Adrenal gland (tissue), 19 donors: ENCODE measurements at regions of chr5 and their contacts with region 1.

Region 1: GRCh38 chr5:73540192-73540591 is 25.2 kb downstream of the ANKRA2 start:
- DNase-seq: peak in 2 of 7 donors; percentile 38 to 43
- H3K4me3 ChIP-seq: no peak overlapping the region
- H3K27ac ChIP-seq: no peak overlapping the region
- H3K4me1 ChIP-seq: peaks cover 0 to 8% of the 10 kb centered on the region in 2 donors
- H3K27me3 ChIP-seq: no peaks in the 10 kb centered on the region
- CTCF ChIP-seq: no peak
- POLR2A ChIP-seq: no peak

Region 2: DNA sequence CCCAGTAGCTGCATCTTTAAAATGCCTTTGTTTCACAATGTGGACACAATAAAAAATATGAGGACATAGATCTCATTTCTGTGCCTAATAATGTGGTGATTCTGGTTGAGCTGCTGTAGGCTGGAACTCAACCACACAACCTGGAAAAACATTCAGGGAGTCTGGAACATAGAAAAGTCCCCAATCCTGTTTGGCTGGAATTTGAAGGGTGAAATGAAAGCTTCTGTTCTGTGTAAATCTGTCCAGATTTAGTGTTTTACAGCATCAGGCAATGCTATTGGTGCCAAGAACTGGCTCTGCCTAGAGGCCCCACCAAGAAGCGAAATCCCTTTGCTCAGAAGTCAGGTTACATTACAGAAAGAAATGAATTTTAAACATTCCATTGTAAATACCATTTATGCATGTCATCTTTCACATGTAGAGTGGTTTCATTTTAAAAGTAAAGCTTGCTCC is 311.0 kb before region 1 on chr5:
- intact Hi-C with region 1: loop called in 1 of 2 experiments (anchors 10 kb)
- DNase-seq: no peak
- H3K4me3 ChIP-seq: no peak overlapping the region
- H3K27ac ChIP-seq: no peak overlapping the region
- H3K4me1 ChIP-seq: peaks cover 10 to 11% of the 10 kb centered on the region in 2 donors
- H3K27me3 ChIP-seq: peaks cover 46% of the 10 kb centered on the region
- CTCF ChIP-seq: no peak
- POLR2A ChIP-seq: no peak

Region 3: DNA sequence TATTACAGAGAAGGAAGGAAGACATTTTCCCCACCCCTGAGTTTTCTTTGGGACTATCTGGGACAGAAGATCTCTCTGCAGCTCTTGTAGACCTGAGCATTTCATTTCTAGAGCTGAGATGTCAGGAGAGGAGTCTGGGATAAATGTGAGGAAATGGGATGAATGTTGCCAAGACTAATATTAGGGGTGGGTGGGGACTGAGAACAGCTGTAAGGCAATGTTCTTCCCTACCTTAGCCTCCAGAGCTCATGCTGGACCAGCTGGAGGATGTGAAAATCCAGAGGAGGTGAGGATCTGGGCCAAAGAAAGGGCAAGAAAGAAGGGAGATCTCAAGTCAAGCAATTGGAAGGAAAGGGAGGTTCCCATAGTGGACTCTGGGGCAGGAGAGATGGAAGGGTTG is 68.5 kb before region 1 on chr5:
- intact Hi-C with region 1: no loop called
- DNase-seq: no peak
- H3K4me3 ChIP-seq: no peak overlapping the region
- H3K27ac ChIP-seq: no peak overlapping the region
- H3K4me1 ChIP-seq: no peaks in the 10 kb centered on the region
- H3K27me3 ChIP-seq: no peaks in the 10 kb centered on the region
- CTCF ChIP-seq: no peak
- POLR2A ChIP-seq: no peak

Region 4: GRCh38 chr5:73519531-73520283 is 20.5 kb before region 1 on chr5:
- intact Hi-C with region 1: loop called in 1 of 2 experiments (anchors 2 kb)
- DNase-seq: peak; percentile 65 to 85 (median 70)
- H3K4me3 ChIP-seq: no peak overlapping the region
- H3K27ac ChIP-seq: no peak overlapping the region
- H3K4me1 ChIP-seq: no peaks in the 10 kb centered on the region
- H3K27me3 ChIP-seq: no peaks in the 10 kb centered on the region
- CTCF ChIP-seq: peak; percentile 40 to 90 (median 74)
- POLR2A ChIP-seq: no peak